ENCODE measurements at regions of chr1 and their contacts with region 1.

Region 1: DNA sequence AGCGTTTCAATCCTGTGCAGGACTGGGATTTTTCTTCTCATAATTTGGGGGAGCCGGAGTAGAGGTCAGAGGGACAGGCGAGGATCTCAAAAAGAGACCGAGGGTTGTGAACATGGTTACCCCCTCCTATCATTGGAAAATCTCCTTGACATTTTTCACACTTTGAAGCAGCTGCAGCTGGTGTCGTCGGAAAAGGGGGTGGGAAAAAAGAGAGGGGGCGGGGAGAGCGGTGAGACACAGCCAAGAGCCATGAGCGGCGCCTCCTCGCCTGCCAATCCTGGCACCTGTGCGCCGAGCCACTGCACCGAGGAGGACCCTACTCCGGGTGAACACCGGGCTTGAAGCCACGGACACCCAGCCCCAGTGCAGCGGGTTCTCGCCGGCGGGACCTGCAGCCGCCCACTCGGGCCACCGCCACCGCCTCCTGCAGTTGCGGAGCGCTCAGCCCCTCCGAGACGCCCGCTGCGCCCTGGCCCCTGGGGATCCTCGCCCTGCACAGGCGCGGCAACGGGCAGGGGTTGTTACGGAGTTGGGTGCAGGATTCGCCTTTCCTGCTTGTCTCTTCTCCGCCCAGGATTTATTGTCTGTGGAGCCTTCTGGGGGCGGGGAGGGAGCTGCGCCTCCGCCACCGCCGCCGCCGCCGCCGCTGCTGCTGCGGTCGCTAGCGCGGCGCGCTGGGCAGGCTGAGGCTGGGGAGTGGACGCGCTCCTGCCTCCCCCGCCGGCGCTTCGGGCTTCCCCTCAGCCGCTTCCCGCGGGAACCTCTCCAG is at the start of gene LRRC7:
- DNase-seq: peak; percentile 45 to 92 (median 53)

Region 2: DNA sequence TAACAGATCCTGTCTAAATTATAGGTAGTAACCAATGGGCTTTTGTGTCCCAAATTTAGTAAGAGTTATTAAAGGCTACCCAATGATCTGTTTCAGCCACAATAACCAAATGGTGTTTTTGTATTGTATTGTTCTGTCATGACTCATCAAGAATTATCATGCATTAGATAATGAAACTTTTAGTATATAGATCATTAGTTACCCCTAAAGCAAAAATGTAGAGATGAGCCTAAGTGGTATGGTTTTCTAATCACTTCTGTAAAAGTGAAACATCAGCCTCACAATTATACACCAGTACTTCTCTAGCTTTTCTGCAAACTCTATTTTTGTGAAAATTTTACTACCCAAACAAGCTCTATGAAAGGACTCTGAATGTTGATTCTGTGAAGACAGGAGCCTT is 71.3 kb after region 1 on chr1:
- intact Hi-C with region 1: loop called (anchors 10 kb)
- DNase-seq: no peak

Region 3: DNA sequence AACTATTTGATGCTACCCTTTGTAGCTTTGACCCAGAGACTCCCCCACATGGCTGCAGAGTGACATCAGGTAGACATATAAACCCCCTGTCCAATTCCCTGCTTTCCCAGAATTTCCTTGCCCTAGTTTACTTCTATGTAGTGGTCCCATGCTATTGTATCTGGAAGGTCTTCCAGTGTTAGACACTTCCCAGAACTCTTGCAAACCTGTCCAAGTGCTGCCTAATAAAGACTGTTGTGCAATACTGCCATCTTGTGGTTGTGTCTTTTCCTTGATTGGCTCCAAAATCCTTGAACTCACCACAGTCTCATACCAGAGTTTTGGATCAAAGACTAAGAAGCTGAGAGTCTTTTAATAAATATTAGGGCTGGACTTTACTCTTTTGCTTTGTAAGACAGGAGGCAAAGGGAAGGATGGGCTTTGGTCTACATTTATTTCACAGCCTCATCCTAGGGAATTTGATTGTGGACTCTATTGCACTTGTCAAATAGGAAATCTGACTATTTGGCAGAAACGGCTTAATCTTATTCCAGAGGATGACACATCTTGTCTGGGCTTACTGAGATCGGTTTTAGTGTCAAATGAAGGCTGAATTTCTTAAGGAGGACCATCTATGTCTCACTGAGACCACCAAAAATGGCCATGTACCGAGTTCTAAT is 169.8 kb after region 1 on chr1:
- intact Hi-C with region 1: loop called (anchors 2 kb)
- DNase-seq: peak in 1 of 10 donors; percentile 12

Measured in posterior cingulate gyrus (tissue), 11 donors.